ENCODE measurements at regions of chr3 and their contacts with region 1.

Region 1: GRCh38 chr3:151838583-151839312 is 24.8 kb downstream of the AADAC start:
- DNase-seq: peak in 2 of 5 donors; percentile 57 to 64
- ATAC-seq: peak; percentile 73 to 91 (median 81)
- H3K4me3 ChIP-seq: peak overlapping the region in 10 of 12 donors; percentile 17 to 45 (median 30)
- H3K27ac ChIP-seq: no peak overlapping the region
- H3K4me1 ChIP-seq: peaks cover 0 to 16% (median 4%) of the 10 kb centered on the region in 12 donors
- H3K27me3 ChIP-seq: no peaks in the 10 kb centered on the region
- CTCF ChIP-seq: peak; percentile 64 to 91 (median 83)
- POLR2A ChIP-seq: no peak

Region 2: GRCh38 chr3:151227807-151228665 is 610.7 kb before region 1 on chr3:
- intact Hi-C with region 1: loop called in 6 of 10 experiments (anchors 5 to 10 kb)
- DNase-seq: peak; percentile 60 to 75 (median 70)
- ATAC-seq: peak; percentile 65 to 94 (median 88)
- H3K4me3 ChIP-seq: no peak overlapping the region
- H3K27ac ChIP-seq: peak overlapping the region in 11 of 12 donors; percentile 19 to 86 (median 62)
- H3K4me1 ChIP-seq: peaks cover 0 to 46% (median 14%) of the 10 kb centered on the region in 12 donors
- H3K27me3 ChIP-seq: no peaks in the 10 kb centered on the region
- CTCF ChIP-seq: peak; percentile 84 to 96 (median 90)
- POLR2A ChIP-seq: no peak

Region 3: DNA sequence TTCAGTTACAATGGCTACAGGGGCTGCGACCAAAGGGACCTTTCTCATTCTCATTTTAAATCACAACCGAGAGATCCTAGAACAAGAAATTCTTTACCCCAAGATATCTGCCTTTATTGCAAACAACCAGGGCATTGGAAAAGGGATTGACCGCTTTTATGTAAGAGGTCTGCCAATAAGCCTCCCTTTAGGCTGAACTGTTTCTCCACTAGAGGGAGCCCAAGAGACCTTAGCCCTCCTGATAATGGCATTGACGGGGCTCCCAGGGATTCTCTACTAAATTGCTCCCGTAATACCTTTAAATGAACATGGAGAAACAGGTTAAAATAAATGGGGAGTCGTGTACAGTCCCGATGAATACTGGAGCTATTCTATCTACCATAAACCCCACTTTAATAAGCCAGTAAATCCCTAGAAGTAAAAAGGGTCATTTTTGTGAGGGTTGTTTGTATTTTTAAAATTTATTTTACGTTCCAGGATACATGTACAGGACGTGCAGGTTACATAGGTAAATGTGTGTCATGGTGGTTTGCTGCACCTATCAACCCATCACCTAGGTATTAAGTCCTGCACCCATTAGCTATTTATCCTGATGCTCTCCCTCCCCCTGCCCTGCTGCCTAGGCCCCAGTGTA is 370.3 kb before region 1 on chr3:
- intact Hi-C with region 1: loop called in 4 of 10 experiments (anchors 5 to 10 kb)
- DNase-seq: peak in 1 of 5 donors; percentile 31
- ATAC-seq: peak in 3 of 4 donors; percentile 58 to 76 (median 70)
- H3K4me3 ChIP-seq: no peak overlapping the region
- H3K27ac ChIP-seq: no peak overlapping the region
- H3K4me1 ChIP-seq: no peaks in the 10 kb centered on the region
- H3K27me3 ChIP-seq: no peaks in the 10 kb centered on the region
- CTCF ChIP-seq: peak; percentile 71 to 91 (median 86)
- POLR2A ChIP-seq: no peak

Region 4: DNA sequence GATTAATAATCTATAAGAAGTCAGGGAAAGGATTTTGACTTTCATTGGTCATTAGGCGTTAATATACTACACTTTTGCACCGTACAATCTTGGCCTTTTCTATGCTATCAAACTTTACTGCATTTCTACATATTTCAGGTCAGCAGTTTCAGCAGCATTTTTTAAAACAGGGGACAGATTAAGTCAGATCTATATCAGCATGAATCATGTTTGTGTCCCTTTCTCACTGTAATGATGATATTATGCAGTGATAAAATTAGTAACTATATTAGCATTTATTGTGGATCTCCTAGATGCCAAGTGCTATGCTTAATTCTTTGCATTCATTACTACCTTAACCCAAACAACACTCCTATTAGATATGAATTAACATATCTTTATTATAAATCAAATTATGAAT is 45.1 kb before region 1 on chr3:
- intact Hi-C with region 1: loop called in 1 of 10 experiments (anchors 1 kb)
- DNase-seq: no peak
- ATAC-seq: no peak
- H3K4me3 ChIP-seq: no peak overlapping the region
- H3K27ac ChIP-seq: no peak overlapping the region
- H3K4me1 ChIP-seq: no peaks in the 10 kb centered on the region
- H3K27me3 ChIP-seq: no peaks in the 10 kb centered on the region
- CTCF ChIP-seq: no peak
- POLR2A ChIP-seq: no peak